ENCODE measurements at regions of chr11 and their contacts with region 1.

Region 1: DNA sequence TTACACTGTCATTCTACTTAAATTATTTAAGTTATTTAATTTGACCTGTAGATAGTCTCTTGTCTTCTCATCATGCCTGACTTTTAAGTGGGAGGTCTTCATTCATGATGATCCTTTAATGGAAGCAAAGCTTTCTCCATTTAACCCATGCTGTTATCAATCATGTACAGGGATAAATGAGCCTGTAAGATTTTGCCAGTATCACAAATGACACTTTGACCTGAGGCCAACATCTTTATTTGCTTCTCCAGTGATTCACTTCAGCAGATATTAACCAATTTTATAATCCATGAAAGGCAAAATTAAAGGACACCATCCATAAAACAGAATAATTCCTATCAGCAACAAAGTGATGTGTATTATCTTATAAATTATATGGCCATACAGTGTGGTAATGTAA is 7.7 kb downstream of the CCDC73 start:
- DNase-seq: no peak
- H3K4me3 ChIP-seq: no peak overlapping the region
- H3K27ac ChIP-seq: no peak overlapping the region
- H3K4me1 ChIP-seq: no peaks in the 10 kb centered on the region
- H3K27me3 ChIP-seq: peaks cover 7% of the 10 kb centered on the region
- CTCF ChIP-seq: no peak
- EP300 ChIP-seq: no peak
- POLR2A ChIP-seq: no peak

Region 2: GRCh38 chr11:31628111-31628510 is 1158.7 kb before region 1 on chr11:
- in situ Hi-C with region 1: no loop called
- intact Hi-C with region 1: no loop called
- DNase-seq: no peak
- H3K4me3 ChIP-seq: no peak overlapping the region
- H3K27ac ChIP-seq: no peak overlapping the region
- H3K4me1 ChIP-seq: no peaks in the 10 kb centered on the region
- H3K27me3 ChIP-seq: no peaks in the 10 kb centered on the region
- CTCF ChIP-seq: no peak
- EP300 ChIP-seq: no peak
- POLR2A ChIP-seq: no peak

Region 3: DNA sequence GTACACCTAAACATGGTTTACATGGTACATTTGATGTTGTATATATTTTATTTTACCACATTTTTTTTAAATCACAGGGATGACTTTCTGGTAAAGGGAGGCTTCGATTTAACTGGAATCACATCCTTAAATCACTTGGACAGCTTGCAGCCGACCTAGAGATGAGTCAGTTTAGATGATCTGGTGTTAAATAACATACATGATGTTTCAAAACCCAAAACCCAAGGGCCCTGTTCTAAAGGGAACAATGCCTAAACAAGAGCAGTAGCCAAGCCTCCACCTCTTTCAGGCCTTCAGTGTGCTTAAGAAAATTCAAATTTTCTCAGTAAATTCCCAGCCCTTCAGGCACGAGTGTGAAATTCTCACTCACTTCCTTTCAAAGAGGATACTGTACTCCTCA is 460.3 kb before region 1 on chr11:
- in situ Hi-C with region 1: loop called (anchors 10 to 25 kb)
- intact Hi-C with region 1: no loop called
- DNase-seq: no peak
- H3K4me3 ChIP-seq: no peak overlapping the region
- H3K27ac ChIP-seq: no peak overlapping the region
- H3K4me1 ChIP-seq: no peaks in the 10 kb centered on the region
- H3K27me3 ChIP-seq: peaks cover 5% of the 10 kb centered on the region
- CTCF ChIP-seq: no peak
- EP300 ChIP-seq: no peak
- POLR2A ChIP-seq: no peak

Measured in transverse colon (tissue), 4 donors.